ENCODE measurements at regions of chr7 and their contacts with region 1.

Region 1: DNA sequence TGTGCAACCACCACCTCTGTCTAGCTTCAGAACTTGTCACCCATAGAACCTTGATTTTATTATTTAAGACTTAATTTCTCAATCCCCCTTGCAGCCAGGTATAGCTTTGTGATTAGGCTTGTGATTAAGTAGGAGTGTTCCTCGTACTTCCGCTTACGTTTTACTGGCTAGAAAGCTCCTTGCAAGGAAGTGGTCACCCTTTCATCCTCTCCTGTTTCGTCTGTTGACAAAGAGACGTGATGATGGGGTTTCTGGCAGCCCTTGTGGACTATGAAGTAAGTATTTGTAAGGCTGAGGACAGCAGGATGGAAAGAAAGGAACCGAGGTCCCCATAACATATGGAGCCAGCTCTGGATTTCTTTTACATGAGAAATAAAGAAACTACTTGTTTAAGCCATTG is 86.5 kb upstream of the KDM7A start:
- DNase-seq: peak; percentile 76
- ATAC-seq: peak; percentile 93
- H3K4me3 Mint-ChIP-seq: peak overlapping the region; percentile 64
- H3K27ac Mint-ChIP-seq: peak overlapping the region; percentile 94
- H3K4me1 Mint-ChIP-seq: peaks cover 58% of the 10 kb centered on the region
- H3K27me3 Mint-ChIP-seq: no peaks in the 10 kb centered on the region

Region 2: GRCh38 chr7:140249036-140249806 is 14.1 kb before region 1 on chr7:
- CTCF ChIA-PET with region 1: interaction called, 11 read pairs
- POLR2A ChIA-PET with region 1: interaction called, 14 read pairs
- DNase-seq: no peak
- ATAC-seq: no peak
- H3K4me3 Mint-ChIP-seq: no peak overlapping the region
- H3K27ac Mint-ChIP-seq: no peak overlapping the region
- H3K4me1 Mint-ChIP-seq: peaks cover 22% of the 10 kb centered on the region
- H3K27me3 Mint-ChIP-seq: peaks cover 2% of the 10 kb centered on the region

Region 3: GRCh38 chr7:140367528-140367927 is 104.3 kb after region 1 on chr7:
- CTCF ChIA-PET with region 1: no interaction called
- POLR2A ChIA-PET with region 1: no interaction called
- DNase-seq: no peak
- ATAC-seq: no peak
- H3K4me3 Mint-ChIP-seq: no peak overlapping the region
- H3K27ac Mint-ChIP-seq: no peak overlapping the region
- H3K4me1 Mint-ChIP-seq: peaks cover 5% of the 10 kb centered on the region
- H3K27me3 Mint-ChIP-seq: no peaks in the 10 kb centered on the region

Measured in activated CD8-positive, alpha-beta T cell treated with anti-CD3 and anti-CD28 coated beads, Interleukin-2, amount 10 ng/mL, durations not matched to agents 7 days and 5 days (primary cell).